CD8-positive, alpha-beta T cell (primary cell): ENCODE measurements at regions of chr17 and their contacts with region 1.

Region 1: DNA sequence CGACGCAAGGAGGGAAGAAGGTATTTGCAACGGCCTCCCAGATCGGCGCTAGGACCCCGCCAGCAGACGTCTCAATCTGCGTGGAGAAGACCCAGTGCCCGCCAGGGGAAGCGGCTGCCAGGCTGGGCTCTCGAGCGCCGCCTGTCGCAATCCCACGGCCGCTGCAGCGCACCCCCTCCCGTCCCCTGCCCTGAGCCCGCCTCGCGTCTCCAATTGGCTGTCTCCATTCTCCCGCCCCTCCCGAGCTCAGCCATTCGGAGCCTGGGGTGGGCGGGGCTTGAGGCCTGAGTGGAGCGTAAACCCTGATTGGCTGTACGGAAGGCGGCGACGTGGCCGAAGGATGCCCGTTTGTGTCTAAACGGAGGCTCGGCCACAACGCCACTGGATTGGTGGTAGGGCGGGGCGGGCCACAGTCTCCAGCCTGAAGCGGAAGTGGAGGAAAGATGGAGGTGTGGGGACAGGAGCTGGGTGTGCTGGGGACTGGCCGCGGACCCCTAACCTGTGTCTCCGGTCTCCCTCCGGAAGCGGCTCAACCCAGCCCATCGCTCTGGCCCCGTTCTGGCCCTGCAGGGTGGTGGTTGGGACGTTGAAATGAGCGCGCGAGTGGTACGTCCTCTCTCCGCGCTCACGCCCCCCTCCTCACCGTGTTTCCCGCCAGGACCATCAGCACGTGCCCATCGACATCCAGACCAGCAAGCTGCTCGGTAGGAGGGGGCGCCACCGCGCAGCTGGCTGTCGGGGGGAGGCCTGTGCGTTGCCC is at the start of gene CDK5RAP3:
- DNase-seq: peak; percentile 97 to 99 (median 99)
- ATAC-seq: peak; percentile 98
- H3K4me3 ChIP-seq: peak within 1 kb of the TSS; percentile 77 to 99
- H3K4me3 Mint-ChIP-seq: peak within 1 kb of the TSS; percentile 98
- H3K27ac ChIP-seq: peak within 1 kb of the TSS; percentile 40 to 84
- H3K27ac Mint-ChIP-seq: peak within 1 kb of the TSS; percentile 89
- H3K4me1 ChIP-seq: peaks cover 19% of the 10 kb centered on the region
- H3K4me1 Mint-ChIP-seq: peaks cover 34% of the 10 kb centered on the region
- H3K27me3 ChIP-seq: no peaks in the 10 kb centered on the region
- H3K27me3 Mint-ChIP-seq: no peaks in the 10 kb centered on the region
- CTCF ChIP-seq: peak; percentile 97
- total RNA-seq, gene CDK5RAP3: 220 to 231 TPM

Region 2: DNA sequence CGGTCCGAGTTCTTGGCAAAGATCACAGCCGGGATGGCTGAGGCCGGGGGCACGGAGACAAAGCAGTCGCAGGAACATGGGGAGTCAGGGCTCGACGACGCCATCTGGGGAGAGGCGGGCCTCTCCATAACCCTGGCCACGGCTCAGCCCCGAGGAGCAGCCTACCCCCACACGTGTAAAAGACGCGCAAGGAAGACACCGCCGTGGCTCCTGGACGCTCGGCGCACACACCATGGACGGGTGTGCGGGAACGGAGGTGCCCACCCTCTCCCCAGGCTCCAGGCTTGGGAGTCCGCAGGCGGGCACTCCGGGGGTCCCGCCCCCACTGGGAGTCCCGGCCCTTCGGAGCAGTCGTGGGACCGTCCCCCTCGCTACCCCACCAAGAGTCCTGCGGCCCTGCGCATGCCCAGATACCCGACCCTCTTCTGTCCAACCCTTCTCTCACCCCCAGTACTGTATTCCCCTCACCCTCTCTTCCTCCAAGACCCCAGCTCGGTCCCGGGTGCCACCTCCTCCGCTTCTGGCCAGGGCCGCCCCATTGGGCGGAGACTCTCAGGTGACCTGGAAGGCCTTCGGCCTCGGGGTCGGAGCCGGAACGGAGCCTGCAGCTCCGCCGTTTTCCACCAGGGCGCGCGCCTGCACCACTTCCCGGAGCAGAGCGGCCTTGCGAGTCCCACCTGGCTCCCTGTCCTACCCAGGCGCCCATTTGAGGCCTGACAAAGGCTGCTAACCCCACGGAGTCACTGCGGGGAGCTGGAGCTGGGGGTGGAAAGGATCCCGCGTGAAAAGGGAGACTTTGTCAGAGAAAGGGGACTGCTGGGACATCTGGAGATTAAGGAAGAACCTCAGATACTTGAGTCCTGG is 129.9 kb before region 1 on chr17 and contains the start of gene SCRN2:
- CTCF ChIA-PET with region 1: interaction called, 18 read pairs
- POLR2A ChIA-PET with region 1: no interaction called
- intact Hi-C with region 1: loop called (anchors 1 kb)
- DNase-seq: peak; percentile 71 to 93 (median 88)
- ATAC-seq: peak; percentile 91
- H3K4me3 ChIP-seq: peak within 1 kb of the TSS; percentile 86 to 97
- H3K4me3 Mint-ChIP-seq: peak within 1 kb of the TSS; percentile 92
- H3K27ac ChIP-seq: peak within 1 kb of the TSS; percentile 58 to 61
- H3K27ac Mint-ChIP-seq: peak within 1 kb of the TSS; percentile 87
- H3K4me1 ChIP-seq: peaks cover 33% of the 10 kb centered on the region
- H3K4me1 Mint-ChIP-seq: peaks cover 28% of the 10 kb centered on the region
- H3K27me3 ChIP-seq: peaks cover 8 to 12% of the 10 kb centered on the region in 2 experiments
- H3K27me3 Mint-ChIP-seq: peaks cover 24% of the 10 kb centered on the region
- CTCF ChIP-seq: peak; percentile 97
- total RNA-seq, gene SCRN2: 17.6 to 19.8 TPM

Region 3: GRCh38 chr17:47941236-47941994 is 29.5 kb before region 1 on chr17 and contains the start of gene PNPO:
- CTCF ChIA-PET with region 1: interaction called, 421 read pairs
- POLR2A ChIA-PET with region 1: interaction called, 15 read pairs
- intact Hi-C with region 1: loop called (anchors 1 kb)
- DNase-seq: peak; percentile 82 to 98 (median 92)
- ATAC-seq: peak; percentile 97
- H3K4me3 ChIP-seq: peak within 1 kb of the TSS; percentile 72 to 92
- H3K4me3 Mint-ChIP-seq: peak within 1 kb of the TSS; percentile 86
- H3K27ac ChIP-seq: peak within 1 kb of the TSS; percentile 57 to 88
- H3K27ac Mint-ChIP-seq: peak within 1 kb of the TSS; percentile 87
- H3K4me1 ChIP-seq: peaks cover 47% of the 10 kb centered on the region
- H3K4me1 Mint-ChIP-seq: peaks cover 54% of the 10 kb centered on the region
- H3K27me3 ChIP-seq: no peaks in the 10 kb centered on the region
- H3K27me3 Mint-ChIP-seq: no peaks in the 10 kb centered on the region
- CTCF ChIP-seq: no peak
- total RNA-seq, gene PNPO: 5.7 to 5.8 TPM

Region 4: GRCh38 chr17:48047741-48048383 is 77.0 kb after region 1 on chr17 and contains the start of gene NFE2L1:
- CTCF ChIA-PET with region 1: interaction called, 3 read pairs
- POLR2A ChIA-PET with region 1: no interaction called
- intact Hi-C with region 1: loop called in 1 of 2 experiments (anchors 1 kb)
- DNase-seq: peak; percentile 93 to 99 (median 97)
- ATAC-seq: peak; percentile 96
- H3K4me3 ChIP-seq: peak within 1 kb of the TSS; percentile 69 to 77
- H3K4me3 Mint-ChIP-seq: peak within 1 kb of the TSS; percentile 93
- H3K27ac ChIP-seq: peak within 1 kb of the TSS; percentile 88 to 91
- H3K27ac Mint-ChIP-seq: peak within 1 kb of the TSS; percentile 99
- H3K4me1 ChIP-seq: peaks cover 41% of the 10 kb centered on the region
- H3K4me1 Mint-ChIP-seq: peaks cover 57% of the 10 kb centered on the region
- H3K27me3 ChIP-seq: no peaks in the 10 kb centered on the region
- H3K27me3 Mint-ChIP-seq: no peaks in the 10 kb centered on the region
- CTCF ChIP-seq: no peak
- total RNA-seq, gene NFE2L1: 29.5 to 32.5 TPM

Region 5: DNA sequence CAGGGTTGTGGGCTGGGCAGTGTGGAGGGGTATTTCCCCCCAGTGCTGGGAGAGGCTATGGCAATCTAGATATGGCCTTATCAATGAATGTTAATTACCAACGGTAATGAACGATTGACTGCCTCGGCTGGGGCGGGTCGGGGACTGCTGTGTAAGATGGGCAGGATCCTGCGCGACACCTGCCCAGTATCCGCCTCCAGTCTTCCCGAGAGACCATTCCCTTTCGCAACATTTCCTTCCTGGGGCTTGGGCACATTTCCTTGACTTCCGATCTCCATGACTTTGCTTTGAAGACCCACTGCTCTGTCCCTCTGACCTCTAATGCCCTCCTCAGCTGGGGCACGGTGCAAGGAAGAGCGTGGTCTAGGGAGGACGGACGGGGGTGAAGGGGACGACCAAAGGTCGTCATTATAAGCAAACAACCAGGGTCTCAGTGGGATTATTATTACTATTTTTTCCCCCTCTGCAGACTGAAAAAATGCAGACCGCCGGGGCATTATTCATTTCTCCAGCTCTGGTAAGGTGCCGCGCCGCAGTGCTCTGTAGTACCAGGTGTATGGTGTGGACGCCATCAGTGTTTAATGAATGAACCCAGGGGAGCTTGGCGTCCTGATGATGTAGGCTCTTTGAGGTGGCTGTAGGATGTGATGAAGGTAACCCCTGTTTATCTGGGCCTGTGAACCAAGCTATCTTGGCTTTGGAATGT is 922.2 kb after region 1 on chr17:
- CTCF ChIA-PET with region 1: no interaction called
- POLR2A ChIA-PET with region 1: no interaction called
- intact Hi-C with region 1: loop called in 1 of 2 experiments (anchors 2 kb)
- DNase-seq: peak in 3 of 9 experiments; percentile 33 to 50 (median 38)
- ATAC-seq: no peak
- H3K4me3 ChIP-seq: peak overlapping the region; percentile 52 to 63
- H3K4me3 Mint-ChIP-seq: peak overlapping the region; percentile 93
- H3K27ac ChIP-seq: peak overlapping the region; percentile 55 to 91
- H3K27ac Mint-ChIP-seq: peak overlapping the region; percentile 99
- H3K4me1 ChIP-seq: peaks cover 15% of the 10 kb centered on the region
- H3K4me1 Mint-ChIP-seq: peaks cover 23% of the 10 kb centered on the region
- H3K27me3 ChIP-seq: no peaks in the 10 kb centered on the region
- H3K27me3 Mint-ChIP-seq: no peaks in the 10 kb centered on the region
- CTCF ChIP-seq: no peak